CD8-positive, alpha-beta T cell (primary cell): ENCODE measurements at regions of chr11 and their contacts with region 1.

Region 1: DNA sequence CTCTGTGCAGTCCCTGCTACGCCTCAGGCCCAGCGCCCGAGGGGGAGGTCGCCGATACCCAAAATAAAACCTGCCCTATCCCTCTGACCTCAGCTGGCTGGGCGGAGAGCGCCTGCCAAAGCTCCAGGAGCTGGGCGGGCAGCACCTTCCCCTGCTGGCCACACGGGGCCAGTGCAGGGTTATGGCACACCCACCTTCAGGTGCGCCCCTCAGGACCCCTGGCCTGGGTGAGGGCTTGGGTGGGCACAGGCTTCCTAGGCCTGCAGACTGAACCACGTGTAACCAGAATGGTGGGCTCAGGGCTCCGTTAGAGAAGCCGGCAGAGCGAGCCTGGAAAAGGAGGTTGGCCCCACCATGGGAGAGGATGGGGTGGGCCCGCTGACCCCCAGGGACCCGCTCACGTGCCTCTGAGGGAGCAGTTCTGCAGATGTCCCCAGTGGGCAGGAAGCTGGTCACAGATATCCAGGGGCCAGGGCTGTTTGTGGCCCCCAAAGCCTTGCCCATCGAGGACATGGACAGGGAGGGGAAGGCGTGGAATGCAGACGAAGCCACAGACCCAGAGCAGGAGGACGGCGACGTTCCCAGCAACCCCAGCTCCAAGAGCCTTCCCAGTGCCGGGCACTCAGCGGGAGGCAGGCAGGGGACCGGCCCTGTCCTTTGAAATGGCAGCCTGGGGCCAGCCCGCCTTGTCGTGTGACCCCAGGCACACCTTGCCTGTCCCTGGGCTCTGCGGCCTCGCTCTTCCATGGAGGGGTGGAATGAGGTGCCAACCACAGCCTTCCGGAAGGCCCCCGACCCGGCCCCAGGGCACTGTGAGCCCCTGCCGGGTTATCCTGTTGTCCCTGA is 1.6 kb upstream of the TNNT3 start:
- DNase-seq: peak in 2 of 9 experiments; percentile 31 to 44
- ATAC-seq: peak; percentile 54
- H3K4me3 ChIP-seq: no peak overlapping the region
- H3K4me3 Mint-ChIP-seq: no peak overlapping the region
- H3K27ac ChIP-seq: no peak overlapping the region
- H3K27ac Mint-ChIP-seq: no peak overlapping the region
- H3K4me1 ChIP-seq: peaks cover 11% of the 10 kb centered on the region
- H3K4me1 Mint-ChIP-seq: peaks cover 26% of the 10 kb centered on the region
- H3K27me3 ChIP-seq: peaks cover 0 to 2% of the 10 kb centered on the region in 2 experiments
- H3K27me3 Mint-ChIP-seq: peaks cover 11% of the 10 kb centered on the region
- CTCF ChIP-seq: peak; percentile 29

Region 2: GRCh38 chr11:1889224-1890120 is 28.4 kb before region 1 on chr11:
- CTCF ChIA-PET with region 1: interaction called, 14 read pairs
- POLR2A ChIA-PET with region 1: interaction called, 24 read pairs
- intact Hi-C with region 1: loop called in 1 of 2 experiments (anchors 1 kb)
- DNase-seq: peak; percentile 63 to 94 (median 83)
- ATAC-seq: peak; percentile 91
- H3K4me3 ChIP-seq: peak overlapping the region; percentile 45 to 64
- H3K4me3 Mint-ChIP-seq: peak overlapping the region; percentile 78
- H3K27ac ChIP-seq: peak overlapping the region; percentile 38 to 70
- H3K27ac Mint-ChIP-seq: peak overlapping the region; percentile 83
- H3K4me1 ChIP-seq: peaks cover 51% of the 10 kb centered on the region
- H3K4me1 Mint-ChIP-seq: peaks cover 52% of the 10 kb centered on the region
- H3K27me3 ChIP-seq: no peaks in the 10 kb centered on the region
- H3K27me3 Mint-ChIP-seq: no peaks in the 10 kb centered on the region
- CTCF ChIP-seq: no peak

Region 3: GRCh38 chr11:1899686-1900085 is 18.2 kb before region 1 on chr11:
- CTCF ChIA-PET with region 1: no interaction called
- POLR2A ChIA-PET with region 1: no interaction called
- intact Hi-C with region 1: no loop called
- DNase-seq: no peak
- ATAC-seq: no peak
- H3K4me3 ChIP-seq: no peak overlapping the region
- H3K4me3 Mint-ChIP-seq: no peak overlapping the region
- H3K27ac ChIP-seq: no peak overlapping the region
- H3K27ac Mint-ChIP-seq: no peak overlapping the region
- H3K4me1 ChIP-seq: no peaks in the 10 kb centered on the region
- H3K4me1 Mint-ChIP-seq: peaks cover 4% of the 10 kb centered on the region
- H3K27me3 ChIP-seq: no peaks in the 10 kb centered on the region
- H3K27me3 Mint-ChIP-seq: peaks cover 17% of the 10 kb centered on the region
- CTCF ChIP-seq: no peak

Region 4: DNA sequence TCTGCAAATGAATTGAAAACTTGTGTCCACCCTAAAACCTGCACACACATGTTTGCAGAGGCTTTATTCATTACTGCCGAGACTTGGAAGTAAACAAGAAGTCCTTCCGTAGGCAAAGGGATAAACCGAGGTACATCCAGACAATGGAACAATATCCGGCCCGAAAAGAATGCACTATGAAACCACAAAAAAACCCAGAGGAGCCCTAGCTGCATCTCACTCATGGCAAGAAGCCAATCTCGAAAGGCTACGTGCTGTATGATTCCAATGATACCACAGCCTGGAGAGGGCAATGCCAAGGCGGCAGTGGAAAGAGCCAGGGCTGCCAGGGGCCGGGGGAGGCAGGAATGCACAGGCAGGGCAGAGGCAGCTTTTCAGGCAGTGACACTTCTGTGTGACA is 26.1 kb after region 1 on chr11:
- CTCF ChIA-PET with region 1: no interaction called
- POLR2A ChIA-PET with region 1: no interaction called
- intact Hi-C with region 1: loop called in 1 of 2 experiments (anchors 1 kb)
- DNase-seq: peak in 1 of 9 experiments; percentile 40
- ATAC-seq: no peak
- H3K4me3 ChIP-seq: no peak overlapping the region
- H3K4me3 Mint-ChIP-seq: no peak overlapping the region
- H3K27ac ChIP-seq: no peak overlapping the region
- H3K27ac Mint-ChIP-seq: no peak overlapping the region
- H3K4me1 ChIP-seq: peaks cover 3% of the 10 kb centered on the region
- H3K4me1 Mint-ChIP-seq: peaks cover 5% of the 10 kb centered on the region
- H3K27me3 ChIP-seq: no peaks in the 10 kb centered on the region
- H3K27me3 Mint-ChIP-seq: no peaks in the 10 kb centered on the region
- CTCF ChIP-seq: no peak